ENCODE measurements at regions of chr14 and their contacts with region 1.

Region 1: DNA sequence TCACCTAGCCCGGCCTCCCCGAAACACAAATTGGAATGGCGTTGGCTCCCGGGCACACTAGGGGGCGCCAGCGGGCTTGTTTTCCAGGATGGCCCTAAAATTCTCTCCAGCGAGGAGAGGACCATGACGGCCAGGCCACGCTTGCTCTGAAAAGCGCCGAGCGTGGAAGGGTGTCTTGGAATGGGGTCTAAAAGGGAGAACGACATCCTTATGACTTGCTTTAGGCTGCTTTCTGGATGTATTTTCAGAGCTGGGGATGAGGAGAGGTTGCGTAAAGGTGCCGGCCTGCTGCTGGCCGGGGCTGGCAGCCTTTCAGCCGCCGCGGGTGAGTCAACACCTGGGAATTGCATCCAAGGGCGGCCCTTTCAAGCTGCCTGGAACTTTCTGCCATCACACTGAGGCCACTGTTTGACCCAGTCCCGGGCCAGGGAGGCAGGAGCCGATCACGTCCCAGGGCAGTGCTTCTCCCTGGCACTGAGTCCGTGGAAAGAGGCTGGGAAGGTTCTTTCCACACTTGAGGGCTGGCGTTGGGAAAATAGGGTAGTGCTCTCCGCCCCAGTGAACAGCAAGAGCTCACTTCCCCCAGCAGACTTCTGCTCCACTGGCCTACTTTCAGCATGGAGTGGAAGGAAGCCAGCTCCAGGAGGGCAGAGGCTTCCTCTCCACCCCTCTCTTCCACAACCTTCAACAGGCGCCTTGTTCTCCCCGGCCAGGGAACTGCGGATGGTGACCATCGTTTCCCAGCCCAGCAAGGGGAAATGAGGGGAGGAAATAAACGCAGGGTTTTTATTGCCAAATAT is 216.2 kb downstream of the TTC8 start:
- DNase-seq: peak; percentile 89 to 94 (median 92)
- H3K4me3 ChIP-seq: peak overlapping the region; percentile 41
- H3K27ac ChIP-seq: peak overlapping the region; percentile 78 to 79
- H3K4me1 ChIP-seq: peaks cover 2% of the 10 kb centered on the region
- H3K27me3 ChIP-seq: no peaks in the 10 kb centered on the region
- CTCF ChIP-seq: peak; percentile 93 to 96 (median 94)
- EP300 ChIP-seq: no peak
- POLR2A ChIP-seq: peak; percentile 32

Region 2: DNA sequence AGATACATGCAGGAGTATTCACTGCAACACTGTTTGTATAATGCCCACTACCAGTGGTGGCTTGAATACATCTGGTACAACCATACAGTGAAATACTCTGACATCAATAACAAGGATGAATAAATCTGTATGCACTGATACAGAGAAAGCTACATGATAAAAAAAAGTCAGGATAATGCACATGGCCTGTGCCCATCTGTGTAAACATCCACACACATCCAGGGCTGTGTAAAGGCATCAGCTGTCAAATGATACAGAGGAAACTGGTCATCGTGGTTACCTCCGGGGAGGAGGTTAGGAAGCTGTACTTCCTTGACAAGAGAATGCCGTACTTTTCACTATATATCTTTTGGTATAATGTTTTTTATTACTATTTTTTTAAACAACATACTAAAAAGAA is 199.8 kb after region 1 on chr14:
- intact Hi-C with region 1: loop called in 1 of 4 experiments (anchors 5 kb)
- DNase-seq: no peak
- H3K4me3 ChIP-seq: no peak overlapping the region
- H3K27ac ChIP-seq: no peak overlapping the region
- H3K4me1 ChIP-seq: peaks cover 22% of the 10 kb centered on the region
- H3K27me3 ChIP-seq: no peaks in the 10 kb centered on the region
- CTCF ChIP-seq: no peak
- EP300 ChIP-seq: no peak
- POLR2A ChIP-seq: no peak

Region 3: GRCh38 chr14:89416002-89416995 is 375.6 kb after region 1 on chr14:
- intact Hi-C with region 1: loop called in 2 of 4 experiments (anchors 5 to 10 kb)
- DNase-seq: peak; percentile 97 to 99 (median 99)
- H3K4me3 ChIP-seq: peak overlapping the region; percentile 84
- H3K27ac ChIP-seq: peak overlapping the region; percentile 82 to 98
- H3K4me1 ChIP-seq: peaks cover 9% of the 10 kb centered on the region
- H3K27me3 ChIP-seq: no peaks in the 10 kb centered on the region
- CTCF ChIP-seq: no peak
- EP300 ChIP-seq: no peak
- POLR2A ChIP-seq: peak; percentile 2